ENCODE measurements at regions of chr18 and their contacts with region 1.

Region 1: DNA sequence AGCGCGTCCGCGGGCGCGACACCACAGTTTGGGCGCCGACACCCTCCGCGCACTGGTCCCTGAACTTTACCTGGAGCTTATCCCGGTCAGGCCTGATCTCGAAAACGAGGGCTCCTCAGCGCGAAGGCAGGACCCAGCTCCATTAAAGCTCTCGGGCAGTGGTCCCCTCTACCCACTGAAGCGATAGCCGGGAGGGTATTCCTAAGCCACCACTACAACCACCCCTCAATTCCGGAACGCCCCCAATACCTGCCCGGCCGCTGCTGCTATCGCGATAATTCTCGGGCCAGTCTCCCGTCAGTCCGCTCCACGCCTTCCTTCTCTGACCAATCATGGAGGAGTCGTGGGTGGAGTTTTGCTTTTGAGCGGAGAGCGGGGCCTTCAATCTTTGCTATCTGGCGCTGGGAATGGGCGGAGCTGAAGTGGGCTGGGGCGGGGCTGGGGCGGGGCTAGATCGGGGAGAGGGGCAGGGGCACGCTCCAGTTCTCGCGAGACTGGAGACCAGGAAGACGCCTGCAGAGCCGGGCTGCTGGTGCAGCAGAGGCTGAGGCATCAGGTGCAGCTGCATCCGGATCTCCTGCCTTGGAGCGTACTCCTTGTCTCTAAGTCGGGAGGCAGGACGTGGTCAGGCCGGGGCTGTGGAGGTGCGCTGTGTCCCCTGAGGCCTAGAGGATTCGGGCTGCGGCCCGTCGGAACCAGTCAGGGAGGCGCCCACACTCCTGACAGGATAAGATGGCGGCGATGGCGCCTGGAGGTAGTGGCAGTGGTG is at the starts of genes PIGN and RELCH:
- DNase-seq: peak; percentile 98
- ATAC-seq: peak; percentile 95
- H3K4me3 ChIP-seq: peak within 1 kb of the TSS; percentile 87 to 100 (median 97)
- H3K4me3 Mint-ChIP-seq: peak within 1 kb of the TSS; percentile 98
- H3K27ac ChIP-seq: peak within 1 kb of the TSS; percentile 73
- H3K27ac Mint-ChIP-seq: peak within 1 kb of the TSS; percentile 96
- H3K4me1 ChIP-seq: peaks cover 30 to 37% of the 10 kb centered on the region in 2 donors
- H3K4me1 Mint-ChIP-seq: peaks cover 61% of the 10 kb centered on the region
- H3K27me3 ChIP-seq: no peaks in the 10 kb centered on the region
- H3K27me3 Mint-ChIP-seq: no peaks in the 10 kb centered on the region
- CTCF ChIP-seq: no peak
- total RNA-seq, gene PIGN: 37.3 and 43.8 TPM in 2 replicates
- total RNA-seq, gene RELCH: 76.0 and 77.9 TPM in 2 replicates

Region 2: GRCh38 chr18:62324917-62325805 is 138.2 kb after region 1 on chr18 and contains the start of gene TNFRSF11A:
- CTCF ChIA-PET with region 1: no interaction called
- POLR2A ChIA-PET with region 1: no interaction called
- intact Hi-C with region 1: loop called (anchors 2 kb)
- DNase-seq: peak; percentile 71
- ATAC-seq: peak; percentile 95
- H3K4me3 ChIP-seq: peak within 1 kb of the TSS; percentile 41 to 66 (median 59)
- H3K4me3 Mint-ChIP-seq: peak within 1 kb of the TSS; percentile 89
- H3K27ac ChIP-seq: no peak within 1 kb of the TSS
- H3K27ac Mint-ChIP-seq: peak within 1 kb of the TSS; percentile 64
- H3K4me1 ChIP-seq: peaks cover 24 to 27% of the 10 kb centered on the region in 2 donors
- H3K4me1 Mint-ChIP-seq: peaks cover 22% of the 10 kb centered on the region
- H3K27me3 ChIP-seq: peaks cover 0 to 55% (median 41%) of the 10 kb centered on the region in 4 experiments
- H3K27me3 Mint-ChIP-seq: peaks cover 64% of the 10 kb centered on the region
- CTCF ChIP-seq: peak; percentile 45
- total RNA-seq, gene TNFRSF11A: 0.41 and 1.7 TPM in 2 replicates

Region 3: GRCh38 chr18:62522504-62523254 is 335.7 kb after region 1 on chr18 and contains the start of gene ZCCHC2:
- CTCF ChIA-PET with region 1: no interaction called
- POLR2A ChIA-PET with region 1: interaction called, 3 read pairs
- intact Hi-C with region 1: loop called (anchors 2 kb)
- DNase-seq: peak; percentile 99
- ATAC-seq: peak; percentile 74
- H3K4me3 ChIP-seq: peak within 1 kb of the TSS; percentile 77 to 88 (median 86)
- H3K4me3 Mint-ChIP-seq: peak within 1 kb of the TSS; percentile 97
- H3K27ac ChIP-seq: peak within 1 kb of the TSS; percentile 73 to 93
- H3K27ac Mint-ChIP-seq: peak within 1 kb of the TSS; percentile 93
- H3K4me1 ChIP-seq: peaks cover 28 to 29% of the 10 kb centered on the region in 2 donors
- H3K4me1 Mint-ChIP-seq: peaks cover 29% of the 10 kb centered on the region
- H3K27me3 ChIP-seq: no peaks in the 10 kb centered on the region
- H3K27me3 Mint-ChIP-seq: no peaks in the 10 kb centered on the region
- CTCF ChIP-seq: no peak
- total RNA-seq, gene ZCCHC2: 53.7 and 63.0 TPM in 2 replicates

Region 4: DNA sequence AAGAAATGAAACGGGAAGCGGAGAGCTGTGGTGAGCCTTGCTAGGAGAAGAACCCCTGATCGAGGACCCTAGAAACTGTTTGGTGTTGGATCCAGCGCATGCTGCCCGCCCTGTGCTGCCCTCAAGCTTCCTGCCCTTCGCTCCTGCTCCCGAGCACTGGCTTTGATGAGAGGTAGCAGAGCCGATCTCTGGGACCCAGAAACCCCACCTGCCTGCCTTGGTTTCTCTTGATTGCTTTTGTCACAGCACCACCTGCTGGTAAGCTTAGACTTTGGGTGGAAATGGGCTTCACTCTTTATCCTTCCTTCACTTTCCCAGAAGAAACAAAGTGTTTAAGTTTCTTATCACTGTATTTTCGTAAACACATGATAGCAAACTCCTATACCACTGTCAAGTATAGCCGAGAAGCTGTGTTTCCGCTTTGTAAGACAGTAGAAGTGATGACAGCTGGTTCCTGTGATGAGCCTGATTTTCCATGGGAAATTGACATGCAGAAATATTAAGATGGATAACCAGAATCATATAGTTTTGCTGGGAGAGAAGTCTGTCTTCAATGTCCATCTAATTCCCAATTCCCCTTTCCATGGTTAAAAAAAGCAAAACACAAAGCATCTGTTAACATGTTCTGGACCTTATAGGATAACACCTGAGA is 795.8 kb after region 1 on chr18:
- CTCF ChIA-PET with region 1: no interaction called
- POLR2A ChIA-PET with region 1: no interaction called
- intact Hi-C with region 1: loop called (anchors 1 kb)
- DNase-seq: peak; percentile 71
- ATAC-seq: peak; percentile 56
- H3K4me3 ChIP-seq: peak overlapping the region in 3 of 5 experiments; percentile 13 to 16 (median 15)
- H3K4me3 Mint-ChIP-seq: no peak overlapping the region
- H3K27ac ChIP-seq: no peak overlapping the region
- H3K27ac Mint-ChIP-seq: no peak overlapping the region
- H3K4me1 ChIP-seq: peaks cover 3 to 5% of the 10 kb centered on the region in 2 donors
- H3K4me1 Mint-ChIP-seq: peaks cover 6% of the 10 kb centered on the region
- H3K27me3 ChIP-seq: no peaks in the 10 kb centered on the region
- H3K27me3 Mint-ChIP-seq: no peaks in the 10 kb centered on the region
- CTCF ChIP-seq: peak; percentile 80

Region 5: GRCh38 chr18:63367053-63367953 is 1180.3 kb after region 1 on chr18 and contains the start of gene KDSR:
- CTCF ChIA-PET with region 1: no interaction called
- POLR2A ChIA-PET with region 1: no interaction called
- intact Hi-C with region 1: loop called (anchors 5 kb)
- DNase-seq: peak; percentile 89
- ATAC-seq: peak; percentile 93
- H3K4me3 ChIP-seq: peak within 1 kb of the TSS; percentile 83 to 94 (median 85)
- H3K4me3 Mint-ChIP-seq: peak within 1 kb of the TSS; percentile 90
- H3K27ac ChIP-seq: peak within 1 kb of the TSS; percentile 51 to 71
- H3K27ac Mint-ChIP-seq: peak within 1 kb of the TSS; percentile 89
- H3K4me1 ChIP-seq: peaks cover 11 to 13% of the 10 kb centered on the region in 2 donors
- H3K4me1 Mint-ChIP-seq: peaks cover 26% of the 10 kb centered on the region
- H3K27me3 ChIP-seq: no peaks in the 10 kb centered on the region
- H3K27me3 Mint-ChIP-seq: no peaks in the 10 kb centered on the region
- CTCF ChIP-seq: no peak
- total RNA-seq, gene KDSR: 21.1 and 26.4 TPM in 2 replicates

Measured in B cell (primary cell).